OCI-LY7 (cell line): ENCODE measurements at regions of chr5 and their contacts with region 1.

Region 1: DNA sequence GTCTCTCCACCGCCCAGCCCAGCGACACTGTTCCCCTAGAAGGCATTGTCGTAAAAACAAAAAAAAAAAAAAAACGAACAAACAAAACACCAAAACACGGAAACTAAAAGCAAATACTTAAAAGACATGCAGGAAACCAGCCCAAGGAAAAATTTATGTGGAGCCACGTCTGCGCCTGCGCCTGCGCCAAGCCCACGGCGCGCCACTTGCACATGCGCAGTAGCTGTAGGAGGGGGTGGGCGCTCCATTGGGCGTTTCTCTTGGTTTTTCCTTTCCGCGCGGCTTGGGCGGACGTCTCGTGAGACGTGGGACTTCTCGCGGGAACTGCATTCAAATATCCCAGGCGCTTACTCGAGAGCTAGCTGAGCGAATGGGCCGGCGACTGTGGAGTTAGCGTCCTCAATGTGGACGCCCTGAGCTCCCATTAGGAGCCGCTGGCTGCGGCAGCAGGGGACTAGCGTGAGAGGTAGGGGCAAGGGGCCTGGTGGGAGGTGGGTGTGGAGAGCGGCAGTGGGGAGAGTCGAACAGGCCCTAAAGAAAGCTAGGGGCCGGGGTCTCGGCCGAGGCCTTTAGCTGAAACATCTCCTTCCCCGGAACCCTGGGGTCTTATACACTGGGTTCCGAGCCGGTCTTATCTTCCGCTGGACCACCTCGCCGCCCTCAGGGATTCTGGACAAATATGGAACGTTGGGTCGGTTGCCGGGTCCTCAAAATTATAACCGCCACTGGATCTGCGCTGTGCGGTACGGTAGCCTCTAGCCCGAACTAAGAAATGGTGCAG is at the start of gene SPDL1:
- DNase-seq: peak; percentile 97
- H3K4me3 ChIP-seq: peak within 1 kb of the TSS; percentile 79
- H3K27ac ChIP-seq: peak within 1 kb of the TSS; percentile 55
- H3K4me1 ChIP-seq: peaks cover 13% of the 10 kb centered on the region
- CTCF ChIP-seq: no peak
- total RNA-seq, gene SPDL1: 27.4 and 40.4 TPM in 2 replicates

Region 2: GRCh38 chr5:168579488-168580226 is 1004.0 kb before region 1 on chr5:
- CTCF ChIA-PET with region 1: no interaction called
- POLR2A ChIA-PET with region 1: interaction called, 3 read pairs
- intact Hi-C with region 1: loop called (anchors 10 kb)
- DNase-seq: peak; percentile 97
- H3K4me3 ChIP-seq: peak overlapping the region; percentile 98
- H3K27ac ChIP-seq: peak overlapping the region; percentile 70
- H3K4me1 ChIP-seq: peaks cover 26% of the 10 kb centered on the region
- CTCF ChIP-seq: no peak

Region 3: GRCh38 chr5:168987543-168988300 is 595.9 kb before region 1 on chr5:
- CTCF ChIA-PET with region 1: no interaction called
- POLR2A ChIA-PET with region 1: no interaction called
- intact Hi-C with region 1: loop called (anchors 1 kb)
- DNase-seq: peak; percentile 51
- H3K4me3 ChIP-seq: no peak overlapping the region
- H3K27ac ChIP-seq: no peak overlapping the region
- H3K4me1 ChIP-seq: peaks cover 7% of the 10 kb centered on the region
- CTCF ChIP-seq: peak; percentile 95

Region 4: DNA sequence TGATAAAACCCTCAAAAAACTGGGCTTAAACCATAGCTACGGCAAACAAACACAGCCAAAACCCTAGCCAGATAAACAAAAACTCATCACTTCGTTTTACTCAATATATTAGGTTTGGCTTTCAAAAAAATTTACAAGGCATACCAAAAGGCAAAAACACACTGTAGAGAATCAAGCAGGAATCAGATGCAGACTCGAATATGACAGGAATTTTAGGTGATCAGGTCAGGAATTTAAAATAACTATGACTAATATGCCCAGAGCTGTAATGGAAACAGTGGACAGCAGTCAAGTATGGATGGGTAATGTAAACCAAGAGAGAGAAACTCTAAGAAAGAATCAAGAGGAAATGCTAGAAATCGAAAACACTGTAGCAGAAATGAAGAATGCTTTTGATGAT is 27.0 kb after region 1 on chr5:
- CTCF ChIA-PET with region 1: no interaction called
- POLR2A ChIA-PET with region 1: no interaction called
- intact Hi-C with region 1: no loop called
- DNase-seq: no peak
- H3K4me3 ChIP-seq: no peak overlapping the region
- H3K27ac ChIP-seq: no peak overlapping the region
- H3K4me1 ChIP-seq: no peaks in the 10 kb centered on the region
- CTCF ChIP-seq: no peak

Region 5: DNA sequence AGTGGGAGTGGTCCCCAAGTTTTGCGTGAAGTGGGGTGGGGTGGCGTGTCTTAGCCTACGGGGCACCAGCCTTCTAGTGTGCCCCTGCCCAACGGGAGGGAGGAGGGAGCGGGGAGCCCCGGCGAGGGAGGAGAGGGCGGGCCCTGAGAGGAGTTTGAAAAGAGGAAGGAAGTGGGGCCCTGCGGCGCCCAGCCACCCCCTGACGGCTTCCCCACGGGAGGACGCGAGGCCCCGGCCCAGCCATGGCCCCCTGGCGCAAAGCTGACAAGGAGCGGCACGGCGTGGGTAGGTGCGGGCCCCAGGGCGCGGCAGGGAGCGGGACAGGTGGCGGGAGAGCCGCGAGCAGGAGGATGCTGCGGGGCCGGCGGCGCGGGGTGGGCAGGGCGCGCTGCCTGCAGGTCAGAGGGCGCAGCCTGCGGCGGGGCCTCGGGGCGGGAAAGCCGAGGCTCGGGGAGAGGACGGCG is 53.5 kb after region 1 on chr5 and contains the start of gene DOCK2:
- CTCF ChIA-PET with region 1: no interaction called
- POLR2A ChIA-PET with region 1: interaction called, 13 read pairs
- intact Hi-C with region 1: loop called (anchors 1 kb)
- DNase-seq: peak; percentile 85
- H3K4me3 ChIP-seq: peak within 1 kb of the TSS; percentile 88
- H3K27ac ChIP-seq: peak within 1 kb of the TSS; percentile 86
- H3K4me1 ChIP-seq: peaks cover 19% of the 10 kb centered on the region
- CTCF ChIP-seq: no peak
- total RNA-seq, gene DOCK2: 159 and 161 TPM in 2 replicates